ENCODE measurements at regions of chr1 and their contacts with region 1.

Region 1: DNA sequence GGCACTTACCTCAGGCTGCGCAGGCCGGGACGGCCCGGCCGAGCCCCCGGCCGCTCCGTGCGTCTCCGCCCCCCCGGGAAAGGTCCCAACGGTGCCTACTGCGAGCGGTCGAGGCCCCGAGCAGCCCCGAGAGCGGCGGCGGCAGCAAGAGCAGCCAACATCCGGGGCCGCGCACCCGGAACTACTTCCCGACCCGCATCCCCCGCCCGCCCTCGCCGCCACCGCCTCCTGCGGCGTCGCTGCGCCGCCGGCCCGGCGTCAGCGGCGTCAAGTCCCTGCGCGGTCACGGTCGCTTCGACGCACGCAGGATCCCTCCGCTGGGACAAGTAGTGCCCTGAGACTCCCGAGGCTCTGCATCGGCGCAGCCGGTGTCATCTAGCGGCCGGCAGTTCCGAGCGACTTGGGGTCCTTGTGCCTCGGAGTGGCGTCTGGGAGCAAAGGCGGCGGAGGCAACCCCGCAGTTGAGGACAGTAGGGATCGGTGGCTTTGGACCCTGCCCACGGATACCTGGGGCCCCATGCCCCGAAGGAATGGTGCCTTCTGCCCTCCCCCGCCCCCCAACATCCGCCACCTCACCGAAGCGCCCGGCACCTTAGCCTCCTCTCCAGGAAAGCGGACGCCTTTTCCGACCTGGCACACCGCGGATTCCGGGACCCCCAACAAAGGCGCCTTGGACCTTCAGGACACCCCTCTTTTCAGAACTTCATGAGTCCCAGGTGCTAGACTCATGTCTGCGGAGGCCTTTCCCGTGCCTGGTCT is at the start of gene FOXJ3:
- DNase-seq: peak; percentile 84 to 95 (median 92)
- ATAC-seq: peak; percentile 86 to 92
- H3K4me3 Mint-ChIP-seq: peak within 1 kb of the TSS; percentile 78 to 98 (median 92)
- H3K27ac Mint-ChIP-seq: peak within 1 kb of the TSS; percentile 88 to 98 (median 94)
- H3K4me1 Mint-ChIP-seq: peaks cover 44 to 66% (median 52%) of the 10 kb centered on the region in 4 donors
- H3K27me3 Mint-ChIP-seq: no peaks in the 10 kb centered on the region
- polyA plus RNA-seq, gene FOXJ3: 30.3 to 39.8 (median 34.8) TPM

Region 2: DNA sequence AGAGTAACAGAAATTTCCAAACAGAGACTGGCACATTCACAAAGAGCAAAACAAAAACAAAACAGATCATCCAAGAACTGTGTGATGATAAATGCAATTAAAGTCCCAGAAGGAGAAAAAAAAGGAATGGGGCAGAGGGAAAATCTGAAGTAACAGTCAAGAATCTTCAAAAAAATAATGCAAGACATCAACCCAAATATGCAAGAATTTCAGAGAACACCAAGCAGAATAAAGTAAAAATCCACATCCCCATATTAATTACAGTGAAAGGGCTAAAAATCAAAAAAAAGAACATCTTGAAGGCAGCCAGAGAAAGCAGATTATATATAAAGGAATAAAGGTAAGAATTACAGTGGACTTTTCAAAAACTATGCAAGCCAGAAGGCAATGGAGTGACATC is 67.3 kb before region 1 on chr1:
- POLR2A ChIA-PET with region 1: no interaction called
- DNase-seq: no peak
- ATAC-seq: no peak
- H3K4me3 Mint-ChIP-seq: peak overlapping the region in 3 of 10 donors; percentile 4 to 36 (median 14)
- H3K27ac Mint-ChIP-seq: peak overlapping the region in 6 of 10 donors; percentile 9 to 80 (median 30)
- H3K4me1 Mint-ChIP-seq: peaks cover 47 to 78% (median 72%) of the 10 kb centered on the region in 4 donors
- H3K27me3 Mint-ChIP-seq: no peaks in the 10 kb centered on the region

Region 3: DNA sequence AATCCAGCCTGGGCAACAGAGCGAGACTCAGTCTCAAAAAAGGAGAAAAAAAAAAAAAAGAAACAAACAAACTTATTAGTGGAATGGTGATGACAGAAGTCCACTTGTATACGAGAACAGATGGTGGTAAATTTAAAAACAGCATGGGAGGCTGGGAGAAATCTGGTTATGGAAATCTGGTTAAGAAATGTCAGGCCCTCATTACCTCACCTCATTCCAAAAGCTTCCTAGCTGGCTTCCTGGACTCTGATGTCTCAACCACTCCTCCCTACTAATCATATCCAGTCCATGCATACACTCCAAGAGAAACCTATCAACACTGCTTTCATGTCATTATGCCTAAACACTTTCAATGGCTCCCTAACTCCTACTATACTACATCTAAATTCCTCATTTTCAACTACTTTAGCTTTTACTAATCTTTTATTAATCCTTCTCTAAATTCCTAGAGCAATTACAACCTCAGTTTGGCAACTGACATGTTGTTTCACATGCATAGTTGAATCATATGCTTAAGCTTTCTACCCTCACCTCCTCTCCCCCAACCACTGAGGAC is 53.1 kb before region 1 on chr1:
- POLR2A ChIA-PET with region 1: no interaction called
- DNase-seq: no peak
- ATAC-seq: no peak
- H3K4me3 Mint-ChIP-seq: peak overlapping the region in 3 of 10 donors; percentile 10 to 20 (median 19)
- H3K27ac Mint-ChIP-seq: peak overlapping the region in 6 of 10 donors; percentile 2 to 35 (median 20)
- H3K4me1 Mint-ChIP-seq: peaks cover 38 to 70% (median 66%) of the 10 kb centered on the region in 4 donors
- H3K27me3 Mint-ChIP-seq: no peaks in the 10 kb centered on the region

Region 4: GRCh38 chr1:42319128-42319851 is 15.9 kb before region 1 on chr1:
- POLR2A ChIA-PET with region 1: interaction called, 24 read pairs
- DNase-seq: peak in 2 of 10 donors; percentile 30 to 32
- ATAC-seq: peak; percentile 46 to 58
- H3K4me3 Mint-ChIP-seq: peak overlapping the region; percentile 66 to 85 (median 80)
- H3K27ac Mint-ChIP-seq: peak overlapping the region; percentile 77 to 95 (median 90)
- H3K4me1 Mint-ChIP-seq: peaks cover 49 to 97% (median 89%) of the 10 kb centered on the region in 4 donors
- H3K27me3 Mint-ChIP-seq: no peaks in the 10 kb centered on the region

Region 5: GRCh38 chr1:42368096-42368795 is 33.0 kb after region 1 on chr1:
- POLR2A ChIA-PET with region 1: no interaction called
- DNase-seq: no peak
- ATAC-seq: no peak
- H3K4me3 Mint-ChIP-seq: no peak overlapping the region
- H3K27ac Mint-ChIP-seq: no peak overlapping the region
- H3K4me1 Mint-ChIP-seq: no peaks in the 10 kb centered on the region
- H3K27me3 Mint-ChIP-seq: peaks cover 6 to 14% (median 13%) of the 10 kb centered on the region in 5 donors